Panc1 (cell line): ENCODE measurements at regions of chr22 and their contacts with region 1.

Region 1: GRCh38 chr22:43077121-43077877 is 11.9 kb downstream of the TTLL1 start:
- DNase-seq: no peak
- ATAC-seq: no peak
- H3K4me3 ChIP-seq: no peak overlapping the region
- H3K27ac ChIP-seq: no peak overlapping the region
- H3K4me1 ChIP-seq: no peaks in the 10 kb centered on the region
- H3K27me3 ChIP-seq: no peaks in the 10 kb centered on the region
- CTCF ChIP-seq: no peak

Region 2: GRCh38 chr22:42684462-42685195 is 392.7 kb before region 1 on chr22:
- CTCF ChIA-PET with region 1: no interaction called
- POLR2A ChIA-PET with region 1: interaction called, 12 read pairs
- in situ Hi-C with region 1: no loop called
- intact Hi-C with region 1: no loop called
- DNase-seq: no peak
- ATAC-seq: no peak
- H3K4me3 ChIP-seq: no peak overlapping the region
- H3K27ac ChIP-seq: no peak overlapping the region
- H3K4me1 ChIP-seq: peaks cover 10% of the 10 kb centered on the region
- H3K27me3 ChIP-seq: no peaks in the 10 kb centered on the region
- CTCF ChIP-seq: no peak